Heart left ventricle (tissue), 16 donors: ENCODE measurements at regions of chr2 and their contacts with region 1.

Region 1: DNA sequence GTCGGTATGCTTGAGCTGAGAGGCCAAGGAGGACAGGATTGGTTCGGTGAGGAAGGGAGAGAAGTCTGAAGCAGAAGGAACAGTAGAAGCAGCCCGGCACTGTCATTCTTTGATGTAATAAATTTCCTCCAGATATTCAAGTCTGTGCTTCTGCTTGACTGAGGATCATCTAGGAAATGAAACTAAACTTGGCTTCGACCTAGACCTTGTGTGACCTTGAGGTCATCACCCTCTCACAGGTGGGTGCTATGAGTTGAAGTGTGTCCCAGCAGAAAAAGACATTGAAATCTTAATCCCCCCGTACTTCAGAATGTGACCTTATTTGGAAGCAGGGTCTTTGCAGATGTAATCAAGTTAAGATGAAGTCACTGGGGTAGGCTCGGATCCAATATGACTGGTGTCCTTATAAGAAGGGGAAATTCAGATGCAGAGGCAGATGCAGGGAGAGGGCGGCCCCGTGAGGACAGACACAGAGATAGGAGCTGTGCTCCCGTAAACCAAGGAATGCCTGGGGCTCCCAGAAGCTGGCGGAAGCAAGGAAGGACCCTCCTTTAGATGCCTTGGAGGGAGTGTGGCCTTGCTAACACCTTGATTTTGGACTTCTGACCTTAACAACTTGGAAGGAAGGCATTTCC is 49.0 kb downstream of the PRKCE start:
- DNase-seq: no peak
- ATAC-seq: peak in 1 of 4 donors; percentile 54
- H3K4me3 ChIP-seq: no peak overlapping the region
- H3K27ac ChIP-seq: peak overlapping the region in 1 of 12 donors; percentile 44
- H3K4me1 ChIP-seq: peaks cover 0 to 54% (median 27%) of the 10 kb centered on the region in 12 donors
- H3K27me3 ChIP-seq: no peaks in the 10 kb centered on the region
- CTCF ChIP-seq: no peak
- POLR2A ChIP-seq: no peak

Region 2: GRCh38 chr2:45664635-45665261 is 35.8 kb before region 1 on chr2:
- intact Hi-C with region 1: loop called in 1 of 10 experiments (anchors 5 kb)
- DNase-seq: no peak
- ATAC-seq: no peak
- H3K4me3 ChIP-seq: no peak overlapping the region
- H3K27ac ChIP-seq: no peak overlapping the region
- H3K4me1 ChIP-seq: peaks cover 0 to 17% (median 11%) of the 10 kb centered on the region in 12 donors
- H3K27me3 ChIP-seq: no peaks in the 10 kb centered on the region
- CTCF ChIP-seq: no peak
- POLR2A ChIP-seq: no peak